ENCODE measurements at regions of chr6 and their contacts with region 1.

Region 1: GRCh38 chr6:44304282-44305199 is 8.6 kb downstream of the AARS2 start:
- DNase-seq: peak; percentile 70
- ATAC-seq: peak; percentile 89
- H3K4me3 ChIP-seq: no peak overlapping the region
- H3K4me3 Mint-ChIP-seq: no peak overlapping the region
- H3K27ac ChIP-seq: no peak overlapping the region
- H3K27ac Mint-ChIP-seq: no peak overlapping the region
- H3K4me1 ChIP-seq: no peaks in the 10 kb centered on the region
- H3K4me1 Mint-ChIP-seq: no peaks in the 10 kb centered on the region
- H3K27me3 ChIP-seq: no peaks in the 10 kb centered on the region
- H3K27me3 Mint-ChIP-seq: no peaks in the 10 kb centered on the region
- CTCF ChIP-seq: peak; percentile 84

Region 2: DNA sequence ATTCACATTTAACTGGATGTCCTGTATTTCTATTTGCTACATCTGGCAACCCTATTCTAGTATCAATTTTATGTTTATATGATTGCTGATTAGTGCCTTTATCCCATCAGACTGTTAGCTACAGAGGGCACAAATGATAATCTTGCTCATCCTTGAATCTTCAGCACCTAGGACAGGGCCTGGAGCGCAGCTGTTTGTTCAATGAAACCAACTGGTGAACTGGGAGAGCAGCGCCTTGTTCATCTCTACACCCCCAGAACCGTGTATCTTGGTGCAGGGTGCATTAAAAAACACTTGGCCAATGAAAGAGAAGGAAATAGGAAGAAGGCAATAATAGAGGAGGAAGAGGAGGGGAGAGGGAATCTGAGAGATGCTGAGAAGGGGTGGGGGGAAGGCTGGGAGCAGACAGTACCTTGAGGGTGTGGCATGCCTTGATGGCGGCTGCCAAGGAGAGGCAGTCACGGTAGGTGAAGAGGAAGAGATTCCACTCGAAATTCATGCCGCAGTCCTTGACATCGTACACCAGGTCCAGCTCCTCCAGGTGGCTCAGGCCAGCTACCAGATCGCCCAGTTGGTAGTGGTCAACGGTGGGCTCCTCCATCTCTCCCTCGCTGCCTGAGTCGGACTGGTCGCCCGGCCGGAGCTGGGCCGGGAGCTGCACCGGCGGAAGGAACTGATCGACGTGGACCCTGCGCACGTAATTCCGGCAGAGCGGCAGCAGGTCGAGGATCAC is 18.8 kb before region 1 on chr6:
- CTCF ChIA-PET with region 1: interaction called, 10 read pairs
- POLR2A ChIA-PET with region 1: no interaction called
- intact Hi-C with region 1: no loop called
- DNase-seq: no peak
- ATAC-seq: no peak
- H3K4me3 ChIP-seq: no peak overlapping the region
- H3K4me3 Mint-ChIP-seq: no peak overlapping the region
- H3K27ac ChIP-seq: no peak overlapping the region
- H3K27ac Mint-ChIP-seq: no peak overlapping the region
- H3K4me1 ChIP-seq: no peaks in the 10 kb centered on the region
- H3K4me1 Mint-ChIP-seq: no peaks in the 10 kb centered on the region
- H3K27me3 ChIP-seq: peaks cover 0 to 25% (median 6%) of the 10 kb centered on the region in 4 experiments
- H3K27me3 Mint-ChIP-seq: peaks cover 67% of the 10 kb centered on the region
- CTCF ChIP-seq: no peak

Region 3: GRCh38 chr6:44356487-44356886 is 51.9 kb after region 1 on chr6:
- CTCF ChIA-PET with region 1: no interaction called
- POLR2A ChIA-PET with region 1: no interaction called
- intact Hi-C with region 1: no loop called
- DNase-seq: no peak
- ATAC-seq: no peak
- H3K4me3 ChIP-seq: no peak overlapping the region
- H3K4me3 Mint-ChIP-seq: no peak overlapping the region
- H3K27ac ChIP-seq: no peak overlapping the region
- H3K27ac Mint-ChIP-seq: no peak overlapping the region
- H3K4me1 ChIP-seq: no peaks in the 10 kb centered on the region
- H3K4me1 Mint-ChIP-seq: no peaks in the 10 kb centered on the region
- H3K27me3 ChIP-seq: peaks cover 0 to 10% (median 4%) of the 10 kb centered on the region in 4 experiments
- H3K27me3 Mint-ChIP-seq: peaks cover 22% of the 10 kb centered on the region
- CTCF ChIP-seq: no peak

Measured in B cell (primary cell).